Gastrocnemius medialis (tissue), 4 donors: ENCODE measurements at regions of chr5 and their contacts with region 1.

Region 1: GRCh38 chr5:39015743-39016586 is 58.2 kb downstream of the RICTOR start:
- DNase-seq: no peak
- ATAC-seq: peak; percentile 53 to 59
- H3K4me3 ChIP-seq: no peak overlapping the region
- H3K27ac ChIP-seq: peak overlapping the region; percentile 82 to 89 (median 86)
- H3K4me1 ChIP-seq: peaks cover 32 to 52% of the 10 kb centered on the region in 2 donors
- H3K27me3 ChIP-seq: no peaks in the 10 kb centered on the region
- CTCF ChIP-seq: no peak
- POLR2A ChIP-seq: no peak

Region 2: DNA sequence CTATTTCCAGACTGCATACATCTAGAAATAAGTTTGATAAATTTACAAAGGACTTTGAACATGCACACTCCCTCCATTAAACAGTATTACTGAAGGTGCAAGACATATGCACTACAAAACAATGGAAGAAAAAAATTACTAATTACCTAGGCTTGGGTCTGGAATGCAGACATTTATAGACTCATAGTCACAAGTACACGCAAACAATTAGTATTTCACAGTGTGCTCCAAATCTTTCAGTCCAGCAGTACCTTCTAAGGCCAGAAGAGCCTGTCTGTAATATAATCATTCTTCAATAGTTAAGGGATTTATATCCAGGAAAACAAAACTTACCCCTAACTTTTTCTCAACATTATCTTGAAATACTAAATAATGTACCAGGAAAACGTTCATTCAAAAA is 47.1 kb after region 1 on chr5:
- in situ Hi-C with region 1: loop called in 1 of 4 experiments (anchors 10 kb)
- intact Hi-C with region 1: no loop called
- DNase-seq: no peak
- ATAC-seq: peak; percentile 37 to 56
- H3K4me3 ChIP-seq: no peak overlapping the region
- H3K27ac ChIP-seq: peak overlapping the region in 3 of 4 donors; percentile 15 to 60 (median 48)
- H3K4me1 ChIP-seq: peaks cover 57 to 72% of the 10 kb centered on the region in 2 donors
- H3K27me3 ChIP-seq: no peaks in the 10 kb centered on the region
- CTCF ChIP-seq: peak in 1 of 5 experiments; percentile 25
- POLR2A ChIP-seq: no peak

Region 3: DNA sequence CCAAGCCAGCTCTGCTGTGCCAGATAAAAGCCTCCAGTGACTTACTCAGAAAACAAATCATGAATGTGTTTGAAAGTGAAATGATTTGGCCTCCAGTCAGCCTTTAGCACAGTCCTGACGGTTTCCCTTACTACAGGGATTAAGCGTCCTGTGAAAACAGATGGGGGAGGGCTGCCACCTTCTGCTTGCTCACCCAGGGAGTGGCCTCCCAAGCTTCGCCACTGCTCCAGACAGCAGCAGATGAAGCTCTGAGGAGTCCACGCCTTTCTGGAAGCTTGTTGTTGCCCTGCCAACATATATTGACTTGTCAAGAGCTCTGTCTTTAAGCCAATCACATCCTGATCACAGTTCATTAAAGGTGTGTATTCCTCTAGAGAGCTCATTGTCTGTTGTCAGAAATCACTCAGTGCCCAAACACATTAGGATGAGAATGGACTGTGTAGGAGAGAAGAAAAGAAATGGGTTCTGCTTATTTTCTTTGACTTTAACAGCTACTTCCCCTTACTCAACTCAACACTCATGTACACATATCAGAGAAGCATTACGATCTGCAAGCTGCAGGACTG is 208.3 kb after region 1 on chr5:
- in situ Hi-C with region 1: no loop called
- intact Hi-C with region 1: loop called (anchors 10 kb)
- DNase-seq: peak; percentile 61 to 77
- ATAC-seq: peak; percentile 89 to 95
- H3K4me3 ChIP-seq: no peak overlapping the region
- H3K27ac ChIP-seq: peak overlapping the region; percentile 29 to 70 (median 62)
- H3K4me1 ChIP-seq: peaks cover 17 to 18% of the 10 kb centered on the region in 2 donors
- H3K27me3 ChIP-seq: no peaks in the 10 kb centered on the region
- CTCF ChIP-seq: no peak
- POLR2A ChIP-seq: no peak

Region 4: GRCh38 chr5:39955156-39955555 is 939.2 kb after region 1 on chr5:
- in situ Hi-C with region 1: no loop called
- intact Hi-C with region 1: no loop called
- DNase-seq: no peak
- ATAC-seq: no peak
- H3K4me3 ChIP-seq: no peak overlapping the region
- H3K27ac ChIP-seq: no peak overlapping the region
- H3K4me1 ChIP-seq: no peaks in the 10 kb centered on the region
- H3K27me3 ChIP-seq: no peaks in the 10 kb centered on the region
- CTCF ChIP-seq: no peak
- POLR2A ChIP-seq: no peak